ENCODE measurements at regions of chr4 and their contacts with region 1.

Region 1: GRCh38 chr4:70704331-70705145 is 16.2 kb downstream of the UTP3 start:
- DNase-seq: peak; percentile 84
- H3K4me3 Mint-ChIP-seq: peak overlapping the region; percentile 87
- H3K27ac Mint-ChIP-seq: peak overlapping the region; percentile 91
- H3K4me1 Mint-ChIP-seq: peaks cover 24% of the 10 kb centered on the region
- H3K27me3 Mint-ChIP-seq: no peaks in the 10 kb centered on the region

Region 2: GRCh38 chr4:70721747-70722146 is 17.2 kb after region 1 on chr4 and contains the start of gene RUFY3:
- intact Hi-C with region 1: loop called (anchors 2 kb)
- DNase-seq: no peak
- H3K4me3 Mint-ChIP-seq: peak within 1 kb of the TSS; percentile 35
- H3K27ac Mint-ChIP-seq: peak within 1 kb of the TSS; percentile 67
- H3K4me1 Mint-ChIP-seq: peaks cover 14% of the 10 kb centered on the region
- H3K27me3 Mint-ChIP-seq: no peaks in the 10 kb centered on the region
- total RNA-seq, gene RUFY3: 11.5 and 14.8 TPM in 2 replicates

Region 3: GRCh38 chr4:70734168-70734954 is 29.8 kb after region 1 on chr4:
- intact Hi-C with region 1: loop called (anchors 1 kb)
- DNase-seq: peak; percentile 85
- H3K4me3 Mint-ChIP-seq: peak overlapping the region; percentile 73
- H3K27ac Mint-ChIP-seq: peak overlapping the region; percentile 48
- H3K4me1 Mint-ChIP-seq: peaks cover 33% of the 10 kb centered on the region
- H3K27me3 Mint-ChIP-seq: no peaks in the 10 kb centered on the region

Region 4: GRCh38 chr4:70749313-70749712 is 44.8 kb after region 1 on chr4:
- intact Hi-C with region 1: no loop called
- DNase-seq: no peak
- H3K4me3 Mint-ChIP-seq: no peak overlapping the region
- H3K27ac Mint-ChIP-seq: no peak overlapping the region
- H3K4me1 Mint-ChIP-seq: peaks cover 4% of the 10 kb centered on the region
- H3K27me3 Mint-ChIP-seq: peaks cover 5% of the 10 kb centered on the region

Region 5: GRCh38 chr4:70801265-70801809 is 96.8 kb after region 1 on chr4:
- intact Hi-C with region 1: loop called (anchors 5 kb)
- DNase-seq: peak; percentile 65
- H3K4me3 Mint-ChIP-seq: peak overlapping the region; percentile 21
- H3K27ac Mint-ChIP-seq: peak overlapping the region; percentile 74
- H3K4me1 Mint-ChIP-seq: peaks cover 16% of the 10 kb centered on the region
- H3K27me3 Mint-ChIP-seq: no peaks in the 10 kb centered on the region

Region 6: GRCh38 chr4:70927502-70928137 is 223.1 kb after region 1 on chr4:
- intact Hi-C with region 1: loop called (anchors 10 kb)
- DNase-seq: peak; percentile 77
- H3K4me3 Mint-ChIP-seq: peak overlapping the region; percentile 25
- H3K27ac Mint-ChIP-seq: peak overlapping the region; percentile 30
- H3K4me1 Mint-ChIP-seq: peaks cover 36% of the 10 kb centered on the region
- H3K27me3 Mint-ChIP-seq: no peaks in the 10 kb centered on the region

Region 7: DNA sequence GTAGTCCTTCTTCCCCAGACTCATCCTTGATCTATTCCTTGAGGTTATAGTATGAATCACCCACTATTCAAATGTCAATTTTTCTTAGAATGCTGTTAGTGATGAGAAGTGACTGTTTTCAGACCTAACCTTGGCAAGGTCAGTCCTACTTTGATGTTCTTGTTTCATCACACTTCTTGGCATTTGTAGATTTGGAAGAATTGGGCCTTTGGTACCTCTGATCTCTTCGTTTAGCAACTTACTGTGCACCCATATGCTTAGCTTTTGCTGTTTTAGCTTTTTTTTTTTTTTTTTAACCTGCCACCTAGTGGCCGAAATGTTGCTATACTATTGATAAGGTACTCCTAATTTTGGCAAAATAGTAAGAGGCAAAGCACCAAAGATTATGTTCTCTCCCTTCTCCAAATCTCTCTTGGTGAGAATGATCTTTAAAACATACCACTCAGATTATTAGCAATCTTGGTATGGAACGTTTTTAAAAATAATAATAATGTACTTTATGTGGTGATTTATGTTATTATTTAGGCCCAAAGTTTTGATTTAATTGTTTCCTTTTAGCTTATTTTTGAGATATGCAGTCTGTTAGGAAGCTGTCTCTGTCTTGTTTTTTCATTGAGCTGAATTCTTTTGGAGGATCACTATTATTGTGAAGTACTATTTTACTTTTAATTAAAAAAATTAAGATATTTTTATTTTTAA is 305.5 kb after region 1 on chr4:
- intact Hi-C with region 1: loop called (anchors 5 kb)
- DNase-seq: peak; percentile 81
- H3K4me3 Mint-ChIP-seq: peak overlapping the region; percentile 3
- H3K27ac Mint-ChIP-seq: peak overlapping the region; percentile 83
- H3K4me1 Mint-ChIP-seq: peaks cover 40% of the 10 kb centered on the region
- H3K27me3 Mint-ChIP-seq: no peaks in the 10 kb centered on the region

Measured in activated CD4-positive, alpha-beta T cell treated with anti-CD3 and anti-CD28 coated beads, Interleukin-2, amount 10 ng/mL, durations not matched to agents 24 days and 14 days (primary cell).